Activated T-helper 1 cell treated with anti-CD3 and anti-CD28 coated beads, Interleukin-12 subunit alpha, Interleukin-12 subunit beta, Interleukin-2, Interleukin-4 antibody, amounts not matched to agents 30 ng/mL and 10 ng/mL and 1 ng/mL, durations not matched to agents 14 hours and 24 hours and 36 hours (primary cell): ENCODE measurements at regions of chr18 and their contacts with region 1.

Region 1: GRCh38 chr18:10213526-10213925 is 240.9 kb upstream of the APCDD1 start:
- DNase-seq: peak; percentile 21
- H3K4me3 Mint-ChIP-seq: no peak overlapping the region
- H3K27ac Mint-ChIP-seq: no peak overlapping the region
- H3K4me1 Mint-ChIP-seq: peaks cover 13% of the 10 kb centered on the region
- H3K27me3 Mint-ChIP-seq: peaks cover 7% of the 10 kb centered on the region

Region 2: DNA sequence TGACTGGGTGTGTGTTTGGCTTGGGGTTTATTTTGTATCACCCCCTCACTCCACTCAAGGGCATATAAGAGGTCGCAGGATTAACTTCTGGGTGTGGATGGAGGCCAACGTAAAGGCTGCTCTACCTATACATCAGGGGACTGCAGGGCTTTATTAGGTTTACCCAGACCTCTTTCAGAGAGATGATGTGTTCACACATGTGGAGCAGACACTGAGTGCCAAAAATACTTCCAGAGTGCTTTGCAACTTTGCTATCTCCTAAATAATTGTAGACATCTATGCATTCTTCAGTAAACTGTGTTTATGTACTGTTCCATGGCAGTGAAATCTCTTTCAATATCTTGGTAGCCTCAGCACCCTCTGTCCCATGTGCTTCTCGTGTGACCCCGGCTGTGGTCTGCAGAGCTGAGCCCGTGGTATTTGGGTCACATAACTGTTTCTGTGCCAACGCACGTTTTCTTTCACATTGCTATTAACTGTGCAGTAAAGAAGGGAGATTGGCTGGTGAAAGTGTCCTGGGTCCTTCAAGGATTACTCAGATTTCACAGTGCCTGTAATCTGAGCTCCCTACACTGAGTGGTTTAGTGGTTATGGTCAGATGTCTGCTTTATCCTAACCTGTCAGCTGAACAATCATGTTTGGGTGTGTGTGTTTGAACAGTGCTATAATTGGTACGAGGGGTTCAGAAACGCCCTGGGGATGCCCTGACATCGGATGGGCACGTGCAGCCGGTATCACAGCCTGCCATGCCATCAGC is 91.6 kb before region 1 on chr18:
- intact Hi-C with region 1: loop called (anchors 1 kb)
- DNase-seq: no peak
- H3K4me3 Mint-ChIP-seq: no peak overlapping the region
- H3K27ac Mint-ChIP-seq: peak overlapping the region; percentile 55
- H3K4me1 Mint-ChIP-seq: peaks cover 25% of the 10 kb centered on the region
- H3K27me3 Mint-ChIP-seq: peaks cover 8% of the 10 kb centered on the region

Region 3: DNA sequence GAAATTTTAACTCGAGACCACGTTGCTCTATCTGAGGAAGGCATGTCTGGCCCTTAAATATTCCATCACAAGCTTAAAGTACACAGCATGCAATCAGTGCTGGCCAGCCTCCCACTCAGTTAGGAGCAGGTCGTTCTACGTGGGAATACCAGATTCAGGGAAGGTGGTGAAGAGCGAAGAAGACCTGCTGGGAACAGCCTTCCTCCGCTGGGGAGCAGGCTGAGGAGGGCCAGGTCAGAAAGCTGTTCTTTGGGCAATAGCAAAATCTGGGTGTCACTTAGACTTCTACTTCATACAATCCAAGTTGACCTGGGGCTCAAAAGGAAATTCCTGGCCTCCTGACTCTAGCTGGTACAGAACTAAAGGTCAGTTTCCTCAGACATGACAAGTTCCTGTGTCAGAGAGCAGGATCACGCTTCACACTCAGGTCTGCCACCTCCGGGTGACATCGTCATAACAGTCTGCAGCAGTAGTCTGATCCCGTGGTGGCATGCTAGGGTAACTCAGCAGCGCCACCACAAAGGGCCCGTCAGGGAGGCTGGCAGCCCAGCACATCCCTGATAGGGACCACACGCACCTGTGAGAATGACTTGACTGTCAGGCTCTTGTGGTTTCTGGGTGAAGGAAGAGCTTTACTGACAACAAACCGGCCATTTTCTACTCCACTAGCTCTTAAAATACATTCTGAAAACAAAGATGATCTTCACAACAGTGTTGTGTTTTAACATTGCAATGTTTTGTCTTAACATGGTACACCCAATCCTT is 277.1 kb after region 1 on chr18:
- intact Hi-C with region 1: loop called (anchors 10 kb)
- DNase-seq: peak; percentile 14
- H3K4me3 Mint-ChIP-seq: no peak overlapping the region
- H3K27ac Mint-ChIP-seq: no peak overlapping the region
- H3K4me1 Mint-ChIP-seq: peaks cover 10% of the 10 kb centered on the region
- H3K27me3 Mint-ChIP-seq: peaks cover under 1% of the 10 kb centered on the region